GM12878 (cell line): ENCODE measurements at regions of chr7 and their contacts with region 1.

Region 1: DNA sequence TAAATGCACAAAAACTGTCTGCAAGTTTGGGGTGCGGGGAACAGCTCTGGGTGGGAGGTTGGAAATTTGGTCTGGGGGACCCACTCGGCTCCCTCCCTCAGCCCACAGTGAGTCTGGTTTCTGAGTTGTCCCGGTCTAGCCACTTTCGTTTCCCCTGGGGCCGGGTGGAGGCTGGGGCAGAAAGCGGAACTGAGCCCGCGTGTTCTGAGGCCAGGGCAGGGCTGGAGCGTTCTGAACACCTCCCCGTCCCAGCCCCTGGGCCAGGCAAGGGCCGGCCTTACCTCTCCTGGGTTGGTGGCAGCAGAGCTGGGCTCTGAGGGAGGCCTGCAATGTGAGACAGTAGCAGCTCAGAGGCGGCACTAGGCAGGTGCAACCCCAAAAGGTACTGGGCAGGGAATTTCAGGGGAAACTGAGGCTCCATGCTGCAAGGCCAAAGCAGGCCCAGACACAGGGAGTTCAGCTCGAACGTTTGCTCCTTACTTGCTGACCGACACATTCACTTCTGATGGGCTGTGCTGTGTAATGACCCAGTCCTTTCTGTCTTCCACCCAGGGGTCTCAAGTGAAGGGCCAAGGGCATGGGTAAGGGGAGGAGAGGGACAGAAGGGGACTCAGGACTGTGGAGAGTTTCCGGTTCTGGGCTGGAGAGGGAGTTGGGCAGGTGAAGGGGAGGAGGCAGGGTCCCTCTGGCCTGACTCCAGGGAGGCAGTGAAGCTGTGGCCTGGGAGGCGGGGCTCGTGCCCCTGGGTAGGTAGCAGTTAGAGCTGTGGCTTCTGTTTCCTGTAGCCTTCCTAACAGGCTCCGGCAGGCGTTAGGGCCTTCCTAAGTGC is 3.0 kb downstream of the IRF5 start:
- DNase-seq: peak; percentile 66
- ATAC-seq: peak; percentile 72
- H3K4me3 ChIP-seq: peak overlapping the region; percentile 71
- H3K27ac ChIP-seq: peak overlapping the region; percentile 96
- H3K4me1 ChIP-seq: peaks cover 32% of the 10 kb centered on the region
- H3K27me3 ChIP-seq: no peaks in the 10 kb centered on the region
- CTCF ChIP-seq: no peak
- EP300 ChIP-seq: peak; percentile 61 to 78; a peak in 2 of 4 replicates
- POLR2A ChIP-seq: peak; percentile 81
- RAD21 ChIP-seq: no peak

Region 2: DNA sequence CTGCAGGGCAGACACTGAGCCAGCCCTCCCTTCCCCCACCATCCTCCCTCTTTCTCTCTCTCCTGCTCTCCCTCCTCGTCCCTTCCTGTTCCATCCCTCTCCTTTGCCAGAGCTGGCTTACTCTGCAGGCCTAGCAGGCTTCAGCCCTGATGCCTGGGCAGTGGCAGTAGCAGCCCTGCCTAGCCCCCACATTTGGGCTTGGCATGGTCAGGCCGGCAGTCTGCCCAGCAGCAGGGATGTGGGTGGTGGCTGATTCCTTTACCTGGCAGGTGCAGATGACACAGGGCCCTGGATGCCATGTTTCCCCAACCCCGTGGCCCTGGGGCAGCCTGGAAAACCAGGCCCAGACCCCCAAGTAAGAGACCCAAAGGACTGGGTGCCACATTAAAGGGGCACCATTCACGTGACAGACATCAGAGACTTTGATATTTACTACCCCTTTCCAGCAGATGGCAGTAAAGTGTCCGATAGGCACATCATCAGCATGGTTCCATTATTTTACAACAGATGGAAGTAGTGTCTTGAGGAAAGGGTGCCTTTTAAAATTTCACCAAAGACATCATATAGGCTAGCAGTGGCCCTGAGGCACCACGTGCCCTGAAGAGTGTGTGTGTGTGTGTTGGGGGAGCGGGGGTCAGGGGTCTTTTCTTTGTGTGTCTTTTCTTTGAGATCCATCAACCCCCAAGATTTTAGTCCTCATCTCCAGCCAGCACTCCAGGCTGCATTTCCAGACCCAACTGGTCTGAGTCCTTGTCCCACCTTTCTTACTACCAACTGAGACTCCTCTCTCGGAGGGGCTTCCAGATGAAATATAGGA is 36.1 kb before region 1 on chr7:
- CTCF ChIA-PET with region 1: interaction called, 3 read pairs
- POLR2A ChIA-PET with region 1: interaction called, 23 read pairs
- RAD21 ChIA-PET with region 1: interaction called, 5 read pairs
- SMC1A ChIA-PET with region 1: interaction called, 3 read pairs
- in situ Hi-C with region 1: no loop called
- intact Hi-C with region 1: loop called (anchors 2 kb)
- DNase-seq: peak; percentile 35
- ATAC-seq: peak; percentile 94
- H3K4me3 ChIP-seq: no peak overlapping the region
- H3K27ac ChIP-seq: no peak overlapping the region
- H3K4me1 ChIP-seq: peaks cover 7% of the 10 kb centered on the region
- H3K27me3 ChIP-seq: no peaks in the 10 kb centered on the region
- CTCF ChIP-seq: peak; percentile 59 to 78 (median 71)
- EP300 ChIP-seq: no peak
- POLR2A ChIP-seq: no peak
- RAD21 ChIP-seq: peak; percentile 92

Region 3: DNA sequence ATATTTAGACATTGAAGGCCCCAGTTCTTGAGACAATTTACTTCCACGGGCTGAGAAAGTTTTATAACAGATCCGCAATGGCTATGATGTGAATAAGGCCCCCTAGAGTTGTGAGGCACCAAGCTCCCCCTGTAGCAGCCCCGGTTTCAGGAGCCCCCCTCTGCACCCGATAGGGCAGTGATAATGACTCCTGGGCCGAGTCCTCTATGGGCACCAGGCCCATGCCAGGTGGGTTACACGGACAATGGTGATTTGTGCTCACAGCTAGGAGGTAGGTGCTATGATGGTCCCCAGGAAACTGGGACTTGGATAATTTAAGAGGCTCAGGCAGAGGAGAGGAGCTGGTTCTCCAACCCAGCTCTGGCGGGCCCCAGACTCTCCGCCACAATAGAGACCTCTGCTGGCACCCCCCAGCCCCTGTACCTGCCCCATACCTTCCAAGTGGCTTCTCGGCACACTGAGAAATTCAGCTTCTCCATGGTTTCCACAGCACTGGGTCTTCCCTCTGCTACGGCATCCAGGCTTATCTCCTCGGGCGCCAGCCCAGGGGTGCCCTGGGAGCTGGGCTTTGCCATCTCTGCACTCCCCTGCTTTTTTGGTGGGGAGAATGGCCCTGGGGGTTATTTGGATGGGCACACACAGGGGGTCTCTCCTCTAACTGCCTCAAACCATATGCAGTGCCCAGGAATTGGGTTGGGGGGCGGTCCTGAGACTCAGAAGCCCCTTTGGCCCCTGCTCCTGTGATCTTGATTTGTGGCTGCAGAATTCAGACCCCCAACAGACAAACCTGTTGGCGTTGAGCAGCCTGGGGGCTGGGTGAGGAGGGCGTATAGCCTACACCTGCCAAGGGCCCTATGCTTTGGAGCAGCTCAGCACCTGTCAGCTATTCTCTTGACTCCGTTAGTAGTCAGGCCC is 18.0 kb before region 1 on chr7:
- CTCF ChIA-PET with region 1: interaction called, 3 read pairs
- POLR2A ChIA-PET with region 1: interaction called, 11 read pairs
- RAD21 ChIA-PET with region 1: interaction called, 4 read pairs
- SMC1A ChIA-PET with region 1: interaction called, 5 read pairs
- in situ Hi-C with region 1: no loop called
- intact Hi-C with region 1: no loop called
- DNase-seq: no peak
- ATAC-seq: no peak
- H3K4me3 ChIP-seq: no peak overlapping the region
- H3K27ac ChIP-seq: no peak overlapping the region
- H3K4me1 ChIP-seq: no peaks in the 10 kb centered on the region
- H3K27me3 ChIP-seq: no peaks in the 10 kb centered on the region
- CTCF ChIP-seq: no peak
- EP300 ChIP-seq: no peak
- POLR2A ChIP-seq: no peak
- RAD21 ChIP-seq: no peak

Region 4: DNA sequence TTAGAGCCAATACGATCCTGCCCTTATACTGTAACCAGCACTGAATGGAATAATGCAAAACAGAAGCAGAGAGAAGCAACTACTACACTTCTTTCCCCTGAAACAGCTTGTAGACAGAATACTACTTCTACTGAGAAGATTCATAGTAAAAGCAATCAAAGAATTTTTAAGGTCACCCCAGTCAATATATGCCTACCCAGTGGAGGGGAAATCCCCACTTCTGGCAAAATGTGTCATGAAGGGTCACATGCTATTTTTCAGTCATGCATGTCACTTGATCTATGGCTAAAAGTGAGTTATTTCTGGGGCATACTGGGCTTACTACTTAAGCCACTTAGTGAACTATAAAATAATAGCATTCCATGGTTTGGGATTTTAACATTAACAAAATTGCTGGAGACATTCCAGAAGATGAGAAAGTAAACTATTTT is 22.6 kb after region 1 on chr7:
- CTCF ChIA-PET with region 1: interaction called, 16 read pairs
- POLR2A ChIA-PET with region 1: interaction called, 107 read pairs
- RAD21 ChIA-PET with region 1: interaction called, 40 read pairs
- SMC1A ChIA-PET with region 1: interaction called, 22 read pairs
- in situ Hi-C with region 1: no loop called
- intact Hi-C with region 1: no loop called
- DNase-seq: peak; percentile 79
- ATAC-seq: peak; percentile 98
- H3K4me3 ChIP-seq: no peak overlapping the region; the same call in 1 of the 2 replicates
- H3K27ac ChIP-seq: peak overlapping the region; percentile 75
- H3K4me1 ChIP-seq: peaks cover 18% of the 10 kb centered on the region
- H3K27me3 ChIP-seq: no peaks in the 10 kb centered on the region
- CTCF ChIP-seq: no peak
- EP300 ChIP-seq: peak; percentile 65 to 75; a peak in 3 of 4 replicates
- POLR2A ChIP-seq: no peak
- RAD21 ChIP-seq: no peak

Region 5: DNA sequence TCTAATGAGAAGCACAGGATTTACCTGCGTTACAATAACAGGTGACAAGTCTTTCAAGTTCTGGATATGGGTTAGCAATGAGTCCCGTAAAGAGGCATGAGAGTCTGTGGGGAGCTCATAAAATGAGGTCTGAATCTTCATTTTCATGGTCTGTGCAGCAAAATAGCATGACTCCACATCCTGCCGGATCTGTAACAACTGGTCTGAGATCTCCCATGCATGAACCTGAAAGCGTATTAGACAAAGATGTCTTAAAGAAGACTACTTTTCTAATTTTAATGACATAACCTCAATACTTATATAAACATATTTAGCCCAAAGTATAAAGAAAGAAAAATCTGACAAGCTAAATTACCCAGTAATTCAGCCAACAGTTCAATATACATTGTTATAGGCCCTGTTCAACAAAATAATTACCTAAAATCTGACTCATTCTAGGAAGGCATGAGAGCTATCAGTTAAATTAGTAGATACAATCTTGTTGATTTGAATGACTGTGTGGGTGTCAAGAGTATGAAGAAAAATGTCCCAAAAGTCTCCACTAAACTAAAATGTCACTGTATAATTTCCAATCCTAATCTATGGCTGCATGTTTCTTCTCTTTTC is 77.3 kb after region 1 on chr7:
- CTCF ChIA-PET with region 1: interaction called, 5 read pairs
- POLR2A ChIA-PET with region 1: interaction called, 12 read pairs
- RAD21 ChIA-PET with region 1: interaction called, 15 read pairs
- SMC1A ChIA-PET with region 1: interaction called, 5 read pairs
- in situ Hi-C with region 1: no loop called
- intact Hi-C with region 1: no loop called
- DNase-seq: peak; percentile 64
- ATAC-seq: peak; percentile 94
- H3K4me3 ChIP-seq: no peak overlapping the region; the same call in 1 of the 2 replicates
- H3K27ac ChIP-seq: peak overlapping the region; percentile 93
- H3K4me1 ChIP-seq: peaks cover 42% of the 10 kb centered on the region
- H3K27me3 ChIP-seq: no peaks in the 10 kb centered on the region
- CTCF ChIP-seq: no peak
- EP300 ChIP-seq: no peak
- POLR2A ChIP-seq: no peak
- RAD21 ChIP-seq: no peak

Region 6: GRCh38 chr7:129144095-129144833 is 203.6 kb after region 1 on chr7 and contains the start of gene TSPAN33:
- CTCF ChIA-PET with region 1: no interaction called
- POLR2A ChIA-PET with region 1: interaction called, 4 read pairs
- RAD21 ChIA-PET with region 1: interaction called, 9 read pairs
- SMC1A ChIA-PET with region 1: interaction called, 7 read pairs
- in situ Hi-C with region 1: no loop called
- intact Hi-C with region 1: loop called (anchors 10 kb)
- DNase-seq: no peak
- ATAC-seq: peak; percentile 76
- H3K4me3 ChIP-seq: peak within 1 kb of the TSS; percentile 97
- H3K27ac ChIP-seq: peak within 1 kb of the TSS; percentile 92
- H3K4me1 ChIP-seq: peaks cover 28% of the 10 kb centered on the region
- H3K27me3 ChIP-seq: no peaks in the 10 kb centered on the region
- CTCF ChIP-seq: no peak
- EP300 ChIP-seq: no peak
- POLR2A ChIP-seq: peak; percentile 73
- RAD21 ChIP-seq: no peak
- polyA plus RNA-seq, gene TSPAN33: 17.8 to 30.0 TPM

Region 7: DNA sequence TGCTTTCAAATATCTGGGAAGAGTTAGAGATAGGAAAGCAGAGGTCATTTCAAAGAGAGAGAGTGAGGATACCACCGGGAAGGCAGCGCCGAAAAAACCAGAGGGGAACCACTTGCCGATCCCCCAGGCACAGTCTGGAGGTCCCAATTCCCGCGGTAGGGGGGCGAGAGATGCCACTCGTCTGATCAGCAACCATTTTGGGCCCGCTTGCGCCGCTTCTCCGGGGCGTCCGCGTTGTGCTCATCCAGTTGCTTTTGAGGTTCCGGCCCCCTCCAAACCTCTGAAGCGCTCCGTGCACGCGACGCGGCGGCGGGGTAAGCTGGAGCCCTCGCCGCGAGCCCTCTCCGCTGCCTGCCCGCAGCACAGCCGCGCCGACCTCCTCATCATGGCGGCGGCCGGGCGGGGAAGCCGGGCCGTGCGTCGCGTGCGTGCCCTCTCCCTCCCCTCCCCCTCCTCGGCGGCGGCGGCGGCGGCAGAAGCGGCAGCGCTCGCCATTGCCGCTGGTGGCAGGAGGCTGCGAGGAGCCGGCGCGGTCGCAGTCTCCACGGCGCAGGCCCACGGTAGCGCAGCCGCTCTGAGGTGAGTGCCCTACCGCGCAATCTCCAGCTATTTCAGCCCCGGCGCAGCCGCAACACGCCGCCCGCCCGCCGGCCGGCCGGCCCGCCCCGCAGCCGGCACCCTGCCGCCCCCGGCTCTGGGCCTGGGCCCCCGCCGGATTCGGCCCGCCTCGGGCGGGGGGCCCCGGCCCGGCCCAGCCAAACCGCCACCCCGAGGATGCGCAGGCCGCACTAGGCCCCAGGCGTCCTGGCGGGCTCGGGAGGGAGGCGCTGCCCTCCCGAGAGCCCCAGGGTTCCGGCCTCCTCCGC is 670.8 kb after region 1 on chr7 and contains the start of gene NRF1:
- CTCF ChIA-PET with region 1: no interaction called
- POLR2A ChIA-PET with region 1: no interaction called
- RAD21 ChIA-PET with region 1: interaction called, 3 read pairs
- SMC1A ChIA-PET with region 1: no interaction called
- in situ Hi-C with region 1: no loop called
- intact Hi-C with region 1: loop called (anchors 10 kb)
- DNase-seq: peak; percentile 57
- ATAC-seq: peak; percentile 87
- H3K4me3 ChIP-seq: peak within 1 kb of the TSS; percentile 96
- H3K27ac ChIP-seq: peak within 1 kb of the TSS; percentile 91
- H3K4me1 ChIP-seq: peaks cover 23% of the 10 kb centered on the region
- H3K27me3 ChIP-seq: no peaks in the 10 kb centered on the region
- CTCF ChIP-seq: peak in 1 of 3 experiments; percentile 15; a peak in 2 of 6 replicates
- EP300 ChIP-seq: no peak
- POLR2A ChIP-seq: peak; percentile 96
- RAD21 ChIP-seq: no peak
- polyA plus RNA-seq, gene NRF1: 3.5 TPM